Activated CD8-positive, alpha-beta T cell treated with anti-CD3 and anti-CD28 coated beads, Interleukin-2, amount 10 ng/mL, durations not matched to agents 7 days and 5 days (primary cell): ENCODE measurements at regions of chr4 and their contacts with region 1.

Region 1: DNA sequence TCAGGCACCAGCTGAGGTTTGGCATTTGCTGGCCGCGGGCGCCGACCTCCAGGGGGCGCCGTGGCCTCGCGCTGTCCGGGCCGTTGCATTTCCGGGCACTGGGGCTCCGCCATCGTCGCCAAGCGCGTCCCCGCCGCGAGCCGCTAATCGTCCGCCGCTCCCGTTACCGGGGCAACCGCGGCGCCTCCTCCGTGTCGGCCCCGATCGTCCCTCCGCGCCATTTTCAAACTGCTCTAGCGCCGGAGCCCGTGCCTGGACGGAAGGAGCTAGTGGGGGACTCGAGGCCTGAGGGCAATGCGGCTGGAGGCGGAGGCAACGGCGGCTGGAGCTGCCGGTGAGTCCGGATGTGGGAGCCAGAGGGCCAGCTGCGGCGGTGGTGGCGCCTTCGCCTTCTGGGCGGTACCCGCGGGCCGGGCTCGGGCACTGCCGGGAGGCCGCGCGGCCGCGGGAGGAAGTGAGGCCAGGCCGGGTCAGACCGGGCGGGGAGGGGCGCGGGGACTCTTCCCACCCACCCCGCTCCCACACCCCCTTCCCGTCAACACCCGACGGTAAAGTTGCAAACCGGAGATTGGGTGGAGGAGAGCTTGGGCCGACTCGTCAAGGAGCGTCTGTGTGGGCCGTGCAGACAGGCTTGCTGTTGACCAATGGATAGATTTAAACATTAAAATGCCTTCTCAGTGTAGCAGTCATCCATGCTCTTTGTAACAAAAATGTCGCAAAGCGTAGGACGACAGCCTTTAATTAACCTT is at the start of gene CEP135:
- DNase-seq: peak; percentile 93
- ATAC-seq: peak; percentile 86
- H3K4me3 Mint-ChIP-seq: peak within 1 kb of the TSS; percentile 76
- H3K27ac Mint-ChIP-seq: peak within 1 kb of the TSS; percentile 97
- H3K4me1 Mint-ChIP-seq: peaks cover 31% of the 10 kb centered on the region
- H3K27me3 Mint-ChIP-seq: no peaks in the 10 kb centered on the region
- total RNA-seq, gene CEP135: 16.4 to 17.0 TPM

Region 2: GRCh38 chr4:55931833-55932232 is 17.1 kb before region 1 on chr4:
- CTCF ChIA-PET with region 1: interaction called, 22 read pairs
- POLR2A ChIA-PET with region 1: interaction called, 3 read pairs
- DNase-seq: no peak
- ATAC-seq: no peak
- H3K4me3 Mint-ChIP-seq: no peak overlapping the region
- H3K27ac Mint-ChIP-seq: no peak overlapping the region
- H3K4me1 Mint-ChIP-seq: no peaks in the 10 kb centered on the region
- H3K27me3 Mint-ChIP-seq: no peaks in the 10 kb centered on the region

Region 3: DNA sequence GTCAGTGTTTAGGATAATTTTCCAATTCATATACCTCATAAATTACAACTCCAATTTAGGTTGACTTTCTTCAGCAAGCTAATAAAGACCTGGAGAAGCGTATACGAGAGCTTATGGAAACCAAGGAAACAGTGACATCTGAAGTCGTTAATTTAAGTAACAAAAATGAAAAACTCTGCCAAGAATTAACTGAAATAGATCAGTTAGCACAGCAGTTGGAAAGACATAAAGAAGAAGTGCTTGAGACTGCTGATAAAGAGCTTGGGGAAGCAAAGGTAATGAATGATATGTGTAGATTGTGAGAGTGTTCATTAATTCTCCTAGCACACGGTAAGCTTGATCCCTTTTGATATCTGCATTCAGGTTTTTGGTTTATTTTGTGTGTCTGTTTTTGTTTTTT is 16.7 kb after region 1 on chr4:
- CTCF ChIA-PET with region 1: interaction called, 36 read pairs
- POLR2A ChIA-PET with region 1: no interaction called
- DNase-seq: no peak
- ATAC-seq: no peak
- H3K4me3 Mint-ChIP-seq: no peak overlapping the region
- H3K27ac Mint-ChIP-seq: no peak overlapping the region
- H3K4me1 Mint-ChIP-seq: no peaks in the 10 kb centered on the region
- H3K27me3 Mint-ChIP-seq: no peaks in the 10 kb centered on the region

Region 4: GRCh38 chr4:56026596-56026995 is 77.7 kb after region 1 on chr4:
- CTCF ChIA-PET with region 1: interaction called, 12 read pairs
- POLR2A ChIA-PET with region 1: no interaction called
- DNase-seq: no peak
- ATAC-seq: no peak
- H3K4me3 Mint-ChIP-seq: no peak overlapping the region
- H3K27ac Mint-ChIP-seq: no peak overlapping the region
- H3K4me1 Mint-ChIP-seq: peaks cover 12% of the 10 kb centered on the region
- H3K27me3 Mint-ChIP-seq: no peaks in the 10 kb centered on the region